IMR-90 (cell line): ENCODE measurements at regions of chr2 and their contacts with region 1.

Region 1: DNA sequence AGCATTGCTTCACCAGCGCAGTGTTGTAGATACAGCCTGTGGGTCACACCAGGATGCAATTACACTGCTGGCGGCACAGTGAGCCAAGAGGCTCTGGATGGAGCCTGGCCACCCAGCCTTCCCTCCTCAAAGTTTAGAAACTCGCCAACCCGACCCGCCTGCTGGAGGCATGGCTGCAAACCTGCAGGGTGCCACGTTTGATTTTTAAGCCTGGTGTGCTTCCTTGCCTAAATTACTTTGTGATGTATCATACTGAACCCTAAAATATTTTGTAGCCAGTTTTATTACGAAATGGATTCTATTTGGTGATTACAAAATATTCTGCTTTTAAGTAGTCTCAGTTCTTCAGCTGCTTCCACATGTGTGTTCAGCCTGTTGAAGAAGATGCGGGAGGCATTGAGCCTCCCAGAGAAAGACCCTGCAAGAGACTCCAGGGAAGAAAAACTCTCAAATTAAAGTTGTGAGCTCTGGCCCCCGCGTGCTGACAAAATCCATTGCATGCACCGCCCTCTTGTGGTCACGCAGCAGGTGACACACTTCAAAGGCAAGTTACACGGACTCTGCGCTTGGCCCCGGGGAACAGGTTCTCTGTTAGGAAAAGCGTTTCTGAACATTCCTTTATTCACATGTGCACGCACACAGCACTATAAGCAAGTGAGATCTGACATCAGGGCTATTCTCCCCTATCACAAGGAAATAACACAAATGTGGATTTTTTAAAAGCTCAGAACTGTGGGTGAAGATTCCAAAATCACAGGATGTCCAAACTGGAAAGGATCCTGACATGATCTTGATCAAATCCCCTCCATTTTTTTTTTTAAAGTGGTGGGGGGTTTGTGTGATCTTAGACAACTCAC is 63.0 kb upstream of the TWIST2 start:
- DNase-seq: peak; percentile 61
- ATAC-seq: peak; percentile 88
- H3K4me3 ChIP-seq: no peak overlapping the region
- H3K27ac ChIP-seq: no peak overlapping the region
- H3K4me1 ChIP-seq: no peaks in the 10 kb centered on the region; the same call in 1 of the 2 replicates
- H3K27me3 ChIP-seq: peaks cover 2% of the 10 kb centered on the region
- CTCF ChIP-seq: peak; percentile 89
- POLR2A ChIP-seq: no peak
- RAD21 ChIP-seq: peak; percentile 89

Region 2: GRCh38 chr2:238362626-238363025 is 422.3 kb before region 1 on chr2:
- CTCF ChIA-PET with region 1: interaction called, 5 read pairs
- POLR2A ChIA-PET with region 1: no interaction called
- dilution Hi-C with region 1: no loop called
- in situ Hi-C with region 1: loop called (anchors 10 kb)
- intact Hi-C with region 1: loop called (anchors 1 kb)
- DNase-seq: no peak
- ATAC-seq: no peak
- H3K4me3 ChIP-seq: no peak overlapping the region
- H3K27ac ChIP-seq: no peak overlapping the region
- H3K4me1 ChIP-seq: no peaks in the 10 kb centered on the region
- H3K27me3 ChIP-seq: no peaks in the 10 kb centered on the region
- CTCF ChIP-seq: no peak
- POLR2A ChIP-seq: no peak
- RAD21 ChIP-seq: no peak

Region 3: GRCh38 chr2:238513346-238513745 is 271.6 kb before region 1 on chr2:
- CTCF ChIA-PET with region 1: interaction called, 12 read pairs
- POLR2A ChIA-PET with region 1: no interaction called
- dilution Hi-C with region 1: no loop called
- in situ Hi-C with region 1: no loop called
- intact Hi-C with region 1: loop called (anchors 1 kb)
- DNase-seq: peak; percentile 29
- ATAC-seq: peak; percentile 56
- H3K4me3 ChIP-seq: no peak overlapping the region
- H3K27ac ChIP-seq: no peak overlapping the region
- H3K4me1 ChIP-seq: no peaks in the 10 kb centered on the region; the same call in 1 of the 2 replicates
- H3K27me3 ChIP-seq: no peaks in the 10 kb centered on the region; the same call in 1 of the 2 replicates
- CTCF ChIP-seq: peak; percentile 50
- POLR2A ChIP-seq: no peak
- RAD21 ChIP-seq: peak; percentile 47; the same call in 1 of the 2 replicates

Region 4: DNA sequence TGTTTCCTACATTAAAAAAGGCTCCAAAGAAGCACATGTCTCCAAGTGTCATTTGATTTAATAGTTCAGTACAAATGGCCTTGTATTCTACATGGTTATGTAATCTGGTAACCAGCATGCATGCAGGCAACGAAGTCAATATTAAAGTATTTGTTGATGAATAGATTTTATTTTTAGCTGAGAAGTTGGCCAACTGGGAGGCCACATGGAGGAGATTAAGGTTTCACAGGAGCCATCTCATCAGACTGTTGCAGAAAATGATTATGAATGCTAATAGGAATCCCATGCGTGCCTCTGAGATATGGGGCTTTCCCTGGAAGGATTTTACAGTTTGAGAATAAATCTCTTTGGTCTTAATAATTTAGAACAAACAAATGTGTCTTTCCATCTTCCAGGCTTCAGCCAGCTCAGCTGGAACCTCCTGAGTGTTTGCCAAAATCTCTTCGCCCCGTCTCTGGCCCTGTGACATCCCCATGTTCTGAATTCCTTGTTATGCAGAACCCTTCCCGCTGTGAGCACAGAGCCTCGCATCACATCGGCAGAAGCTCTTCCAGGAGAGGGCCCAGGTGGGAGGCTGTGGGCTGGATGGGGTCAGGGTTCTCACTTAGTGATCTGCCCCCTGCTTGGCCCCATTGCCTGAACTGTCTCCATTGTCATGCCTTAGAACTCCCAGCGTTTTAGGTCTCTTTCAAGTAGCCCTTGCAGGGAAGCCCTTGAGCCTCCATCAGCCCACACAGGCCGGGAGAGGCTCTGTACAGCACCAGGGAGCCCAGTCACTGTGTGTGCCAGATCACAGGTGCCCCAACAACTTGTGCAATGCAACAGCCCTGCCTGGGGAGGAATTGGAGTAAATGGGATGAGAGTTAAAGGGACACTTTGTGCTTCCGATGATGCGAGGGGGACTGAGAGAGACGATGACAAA is 127.5 kb before region 1 on chr2:
- CTCF ChIA-PET with region 1: no interaction called
- POLR2A ChIA-PET with region 1: no interaction called
- dilution Hi-C with region 1: no loop called
- in situ Hi-C with region 1: no loop called
- intact Hi-C with region 1: no loop called
- DNase-seq: no peak
- ATAC-seq: no peak
- H3K4me3 ChIP-seq: no peak overlapping the region
- H3K27ac ChIP-seq: no peak overlapping the region
- H3K4me1 ChIP-seq: no peaks in the 10 kb centered on the region; the same call in 1 of the 2 replicates
- H3K27me3 ChIP-seq: no peaks in the 10 kb centered on the region; the same call in 1 of the 2 replicates
- CTCF ChIP-seq: no peak
- POLR2A ChIP-seq: no peak
- RAD21 ChIP-seq: no peak

Region 5: DNA sequence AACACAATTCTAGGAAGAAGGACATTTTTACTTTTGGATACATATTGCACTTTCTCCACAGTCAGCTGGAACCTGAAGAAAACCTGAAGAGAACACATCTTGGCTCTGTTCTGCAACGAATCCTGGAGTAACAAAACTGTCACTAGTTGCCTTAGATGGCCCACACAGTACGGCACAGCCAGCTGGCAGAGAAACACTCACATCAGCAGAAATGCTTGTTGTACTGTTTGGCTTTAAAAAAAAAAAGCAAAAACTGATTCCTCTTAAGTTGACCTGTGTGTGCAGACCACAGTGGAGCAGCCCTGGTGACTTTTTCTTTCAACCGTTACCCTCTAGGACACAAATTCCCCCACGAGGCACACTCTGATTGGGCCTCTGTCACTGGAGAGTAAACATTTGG is 89.4 kb before region 1 on chr2:
- CTCF ChIA-PET with region 1: interaction called, 12 read pairs
- POLR2A ChIA-PET with region 1: no interaction called
- dilution Hi-C with region 1: no loop called
- in situ Hi-C with region 1: no loop called
- intact Hi-C with region 1: no loop called
- DNase-seq: no peak
- ATAC-seq: no peak
- H3K4me3 ChIP-seq: no peak overlapping the region
- H3K27ac ChIP-seq: peak overlapping the region; percentile 37; the same call in 1 of the 2 replicates
- H3K4me1 ChIP-seq: peaks cover 8% of the 10 kb centered on the region; the same call in 1 of the 2 replicates
- H3K27me3 ChIP-seq: no peaks in the 10 kb centered on the region
- CTCF ChIP-seq: no peak
- POLR2A ChIP-seq: no peak
- RAD21 ChIP-seq: no peak

Region 6: DNA sequence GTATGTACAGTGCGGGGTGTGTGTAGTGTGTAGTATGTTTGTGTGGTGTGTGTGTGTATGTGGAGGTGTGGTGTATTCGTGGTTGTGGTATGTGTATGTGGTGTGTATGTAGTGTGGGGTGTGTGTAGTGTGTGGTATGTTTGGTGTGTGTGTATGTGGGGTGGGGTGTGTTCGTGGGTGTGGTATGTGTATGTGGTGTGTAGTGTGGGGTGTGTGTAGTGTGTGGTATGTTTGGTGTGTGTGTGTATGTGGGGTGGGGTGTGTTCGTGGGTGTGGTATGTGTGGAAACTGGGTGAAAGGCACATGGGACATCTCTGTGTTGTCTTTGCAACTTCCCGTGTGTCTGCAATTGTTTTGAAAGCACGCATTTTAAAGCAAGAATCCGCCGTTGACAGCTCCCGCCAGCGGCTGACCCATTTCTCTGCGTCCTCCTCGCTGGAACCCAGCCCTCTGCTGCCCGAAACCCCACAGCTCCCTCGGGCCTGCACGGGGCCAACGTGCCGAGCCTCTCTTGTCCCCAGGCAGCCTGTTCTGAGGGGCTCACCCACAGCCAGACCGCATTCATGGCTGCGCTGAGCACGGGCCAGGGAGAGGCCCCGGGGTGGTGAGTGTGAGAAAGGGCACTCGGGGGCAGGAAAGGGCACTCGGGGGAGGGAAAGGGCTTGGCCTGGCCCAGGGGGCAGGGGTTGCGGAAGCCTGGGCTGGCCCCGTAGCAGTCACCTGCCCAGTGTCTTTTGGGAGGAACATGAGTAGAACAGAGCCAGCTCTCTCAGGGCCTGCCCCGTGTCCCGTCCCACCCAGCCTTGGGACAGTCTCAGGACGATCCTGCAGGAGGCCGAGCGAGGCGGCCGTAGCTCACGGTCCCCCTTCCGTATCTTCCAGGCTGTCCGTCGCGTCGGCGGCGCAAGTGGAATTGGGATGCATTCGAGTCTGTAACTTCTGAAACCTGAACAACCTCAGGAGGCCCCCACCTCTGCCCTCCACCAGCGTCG is 124.4 kb after region 1 on chr2:
- CTCF ChIA-PET with region 1: no interaction called
- POLR2A ChIA-PET with region 1: no interaction called
- dilution Hi-C with region 1: no loop called
- in situ Hi-C with region 1: no loop called
- intact Hi-C with region 1: no loop called
- DNase-seq: peak; percentile 34
- ATAC-seq: peak; percentile 36
- H3K4me3 ChIP-seq: no peak overlapping the region
- H3K27ac ChIP-seq: no peak overlapping the region
- H3K4me1 ChIP-seq: peaks cover 7% of the 10 kb centered on the region
- H3K27me3 ChIP-seq: no peaks in the 10 kb centered on the region
- CTCF ChIP-seq: no peak
- POLR2A ChIP-seq: no peak
- RAD21 ChIP-seq: no peak

Region 7: GRCh38 chr2:238970553-238971081 is 185.7 kb after region 1 on chr2:
- CTCF ChIA-PET with region 1: no interaction called
- POLR2A ChIA-PET with region 1: no interaction called
- dilution Hi-C with region 1: no loop called
- in situ Hi-C with region 1: no loop called
- intact Hi-C with region 1: loop called (anchors 10 kb)
- DNase-seq: peak; percentile 63
- ATAC-seq: peak; percentile 90
- H3K4me3 ChIP-seq: no peak overlapping the region
- H3K27ac ChIP-seq: no peak overlapping the region
- H3K4me1 ChIP-seq: peaks cover 10% of the 10 kb centered on the region
- H3K27me3 ChIP-seq: no peaks in the 10 kb centered on the region; the same call in 1 of the 2 replicates
- CTCF ChIP-seq: peak; percentile 95
- POLR2A ChIP-seq: no peak
- RAD21 ChIP-seq: peak; percentile 80